Activated CD8-positive, alpha-beta T cell treated with anti-CD3 and anti-CD28 coated beads, Interleukin-2, amount 10 ng/mL, durations not matched to agents 7 days and 5 days (primary cell): ENCODE measurements at regions of chr3 and their contacts with region 1.

Region 1: DNA sequence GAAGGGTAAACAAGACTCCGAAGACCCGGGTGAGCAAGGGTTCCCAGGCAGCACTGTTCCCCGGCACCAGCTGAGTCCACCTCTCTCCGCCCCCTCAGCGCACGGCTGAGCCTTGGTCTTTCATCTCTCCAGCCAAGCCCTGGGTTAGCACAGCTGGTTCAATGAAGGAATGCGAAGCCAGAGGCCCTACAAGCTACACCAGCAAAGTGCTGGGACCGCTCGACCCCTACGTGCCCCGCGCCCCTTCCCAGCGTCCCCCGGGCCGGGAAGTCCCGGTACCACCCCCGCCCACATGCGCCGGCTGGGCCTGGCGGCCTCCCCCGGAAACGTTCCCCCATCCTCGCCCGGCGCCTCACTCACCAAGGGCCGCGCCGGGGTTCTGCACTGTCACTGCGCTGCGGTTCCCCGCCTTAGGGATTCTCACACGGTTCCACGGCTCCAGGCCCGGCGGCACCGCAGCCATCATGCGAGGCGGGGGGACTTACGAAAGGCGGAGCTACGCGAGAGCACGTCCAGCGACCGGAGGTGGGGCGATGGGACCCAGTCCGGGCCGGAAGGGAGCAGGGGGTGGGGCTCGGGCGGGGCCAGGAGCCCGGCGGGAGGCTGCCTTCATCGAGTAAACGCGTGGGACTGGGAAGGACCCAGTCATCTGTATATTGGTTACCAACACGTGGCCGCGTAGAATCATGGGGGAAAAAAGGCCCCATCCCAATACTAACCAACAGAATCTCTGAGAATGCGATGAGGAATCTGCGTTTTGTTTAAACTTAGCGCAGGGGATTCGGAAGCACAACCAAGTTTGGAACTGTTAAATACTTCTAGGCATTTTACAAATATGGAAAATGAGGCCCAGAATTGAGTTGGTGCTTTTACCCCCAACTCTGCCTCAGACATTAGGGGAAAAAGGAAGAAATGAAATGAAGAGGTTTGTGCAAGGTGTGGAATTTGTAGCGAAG is 28.7 kb downstream of the GTPBP8 start:
- DNase-seq: peak; percentile 89
- ATAC-seq: peak; percentile 96
- H3K4me3 Mint-ChIP-seq: peak overlapping the region; percentile 82
- H3K27ac Mint-ChIP-seq: peak overlapping the region; percentile 91
- H3K4me1 Mint-ChIP-seq: peaks cover 36% of the 10 kb centered on the region
- H3K27me3 Mint-ChIP-seq: no peaks in the 10 kb centered on the region

Region 2: GRCh38 chr3:113035387-113035982 is 16.0 kb after region 1 on chr3:
- CTCF ChIA-PET with region 1: interaction called, 10 read pairs
- POLR2A ChIA-PET with region 1: no interaction called
- DNase-seq: peak; percentile 56
- ATAC-seq: peak; percentile 72
- H3K4me3 Mint-ChIP-seq: no peak overlapping the region
- H3K27ac Mint-ChIP-seq: no peak overlapping the region
- H3K4me1 Mint-ChIP-seq: no peaks in the 10 kb centered on the region
- H3K27me3 Mint-ChIP-seq: no peaks in the 10 kb centered on the region

Region 3: DNA sequence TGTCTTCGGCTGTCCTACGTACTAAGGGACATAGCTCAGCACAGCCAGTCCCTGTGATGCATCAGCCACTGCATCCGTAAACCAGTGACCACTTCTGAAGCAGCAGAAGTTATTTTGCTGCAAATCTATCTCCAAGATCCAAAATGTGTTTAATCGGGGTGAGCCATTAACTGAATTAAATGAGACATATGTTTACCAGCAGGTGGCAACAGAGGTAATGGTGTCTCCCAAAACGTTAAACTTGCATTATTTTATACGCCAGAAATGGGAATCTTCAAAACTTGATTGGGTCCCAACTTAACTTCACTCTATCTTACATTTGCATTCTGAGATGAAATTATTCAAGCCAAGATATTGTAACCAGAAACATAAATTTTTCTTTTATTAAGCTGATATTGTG is 116.6 kb after region 1 on chr3:
- CTCF ChIA-PET with region 1: no interaction called
- POLR2A ChIA-PET with region 1: no interaction called
- DNase-seq: no peak
- ATAC-seq: no peak
- H3K4me3 Mint-ChIP-seq: no peak overlapping the region
- H3K27ac Mint-ChIP-seq: no peak overlapping the region
- H3K4me1 Mint-ChIP-seq: no peaks in the 10 kb centered on the region
- H3K27me3 Mint-ChIP-seq: no peaks in the 10 kb centered on the region